CD4-positive, alpha-beta T cell (primary cell): ENCODE measurements at regions of chr3 and their contacts with region 1.

Region 1: GRCh38 chr3:125374996-125375941 is at the start of gene ZNF148:
- DNase-seq: peak; percentile 83 to 96 (median 90)
- ATAC-seq: peak; percentile 90
- H3K4me3 ChIP-seq: peak within 1 kb of the TSS; percentile 87
- H3K4me3 Mint-ChIP-seq: peak within 1 kb of the TSS; percentile 98
- H3K27ac ChIP-seq: peak within 1 kb of the TSS; percentile 88 to 92
- H3K27ac Mint-ChIP-seq: peak within 1 kb of the TSS; percentile 99
- H3K4me1 ChIP-seq: peaks cover 33% of the 10 kb centered on the region
- H3K4me1 Mint-ChIP-seq: peaks cover 56% of the 10 kb centered on the region
- H3K27me3 ChIP-seq: no peaks in the 10 kb centered on the region
- H3K27me3 Mint-ChIP-seq: no peaks in the 10 kb centered on the region
- CTCF ChIP-seq: no peak
- total RNA-seq, gene ZNF148: 30.9 to 34.0 TPM

Region 2: GRCh38 chr3:123584988-123585937 is 1790.0 kb before region 1 on chr3 and contains the start of gene HACD2:
- CTCF ChIA-PET with region 1: no interaction called
- POLR2A ChIA-PET with region 1: no interaction called
- intact Hi-C with region 1: loop called in 1 of 2 experiments (anchors 10 kb)
- DNase-seq: peak; percentile 85 to 98 (median 92)
- ATAC-seq: peak; percentile 93
- H3K4me3 ChIP-seq: peak within 1 kb of the TSS; percentile 79
- H3K4me3 Mint-ChIP-seq: peak within 1 kb of the TSS; percentile 95
- H3K27ac ChIP-seq: peak within 1 kb of the TSS; percentile 84 to 92
- H3K27ac Mint-ChIP-seq: peak within 1 kb of the TSS; percentile 89
- H3K4me1 ChIP-seq: peaks cover 16% of the 10 kb centered on the region
- H3K4me1 Mint-ChIP-seq: peaks cover 25% of the 10 kb centered on the region
- H3K27me3 ChIP-seq: no peaks in the 10 kb centered on the region
- H3K27me3 Mint-ChIP-seq: no peaks in the 10 kb centered on the region
- CTCF ChIP-seq: no peak
- total RNA-seq, gene HACD2: 12.1 to 13.3 TPM

Region 3: DNA sequence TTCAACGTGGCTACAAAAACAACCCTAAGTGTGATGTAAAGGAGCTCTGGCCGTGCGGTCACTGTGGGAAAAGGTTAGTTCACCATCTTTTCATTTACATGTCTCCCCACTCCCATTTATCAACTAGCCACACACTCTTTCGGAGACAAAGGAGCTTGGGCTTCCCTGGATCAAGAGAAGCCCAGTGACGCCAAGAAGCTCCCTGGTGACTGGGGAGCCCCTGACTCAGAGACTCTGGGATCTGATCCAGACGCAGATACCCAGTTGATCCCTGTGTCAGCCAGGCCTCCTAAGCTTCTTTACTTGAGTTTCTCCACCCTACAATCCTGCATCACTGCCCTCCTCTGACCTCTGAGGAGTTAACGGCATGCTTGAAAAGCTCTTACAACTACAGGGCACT is 363.3 kb before region 1 on chr3:
- CTCF ChIA-PET with region 1: no interaction called
- POLR2A ChIA-PET with region 1: no interaction called
- intact Hi-C with region 1: no loop called
- DNase-seq: no peak
- ATAC-seq: no peak
- H3K4me3 ChIP-seq: no peak overlapping the region
- H3K4me3 Mint-ChIP-seq: no peak overlapping the region
- H3K27ac ChIP-seq: no peak overlapping the region
- H3K27ac Mint-ChIP-seq: peak overlapping the region; percentile 0
- H3K4me1 ChIP-seq: peaks cover 14% of the 10 kb centered on the region
- H3K4me1 Mint-ChIP-seq: peaks cover 36% of the 10 kb centered on the region
- H3K27me3 ChIP-seq: no peaks in the 10 kb centered on the region
- H3K27me3 Mint-ChIP-seq: no peaks in the 10 kb centered on the region
- CTCF ChIP-seq: no peak

Region 4: DNA sequence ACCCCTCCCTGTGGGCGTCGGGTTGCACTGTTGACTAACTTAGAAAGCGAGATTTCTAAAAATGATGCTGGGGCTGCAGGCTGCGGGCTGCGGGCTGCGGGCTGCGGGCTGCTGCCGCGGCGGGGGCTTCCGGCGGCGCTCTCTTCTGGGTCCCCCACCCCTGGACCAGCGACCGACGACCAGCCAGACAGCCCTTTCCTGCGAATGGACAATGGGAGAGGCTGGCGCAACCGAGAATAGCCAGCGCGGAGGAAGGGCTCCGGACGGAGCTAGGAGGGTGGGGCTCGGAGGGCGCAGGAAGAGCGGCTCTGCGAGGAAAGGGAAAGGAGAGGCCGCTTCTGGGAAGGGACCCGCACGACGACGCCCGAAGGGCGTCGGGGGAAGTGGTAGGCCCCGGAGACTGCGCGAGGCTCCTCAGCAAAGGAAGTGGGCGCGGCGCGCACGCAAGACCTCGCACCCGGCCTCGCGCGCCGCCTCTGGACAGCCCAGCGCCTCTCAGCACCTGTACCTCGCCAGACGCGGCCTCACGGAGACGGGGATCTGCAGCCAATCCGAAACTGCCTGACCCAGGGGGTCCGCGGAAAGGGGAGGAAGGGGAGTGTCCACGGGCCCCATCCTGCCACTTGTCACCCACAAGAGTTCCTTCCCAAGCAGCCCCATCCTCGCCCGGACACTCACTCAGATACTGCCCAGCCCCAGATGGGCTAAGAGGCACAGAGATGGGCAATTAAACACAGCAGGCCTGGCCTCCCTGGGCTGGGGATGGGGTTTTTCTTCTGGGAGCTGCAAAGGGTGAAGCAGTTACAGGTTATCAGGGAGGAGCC is 233.5 kb before region 1 on chr3:
- CTCF ChIA-PET with region 1: no interaction called
- POLR2A ChIA-PET with region 1: interaction called, 3 read pairs
- intact Hi-C with region 1: loop called in 1 of 2 experiments (anchors 5 kb)
- DNase-seq: peak; percentile 27 to 85 (median 67)
- ATAC-seq: peak; percentile 89
- H3K4me3 ChIP-seq: peak overlapping the region; percentile 53
- H3K4me3 Mint-ChIP-seq: peak overlapping the region; percentile 80
- H3K27ac ChIP-seq: no peak overlapping the region
- H3K27ac Mint-ChIP-seq: peak overlapping the region; percentile 16
- H3K4me1 ChIP-seq: peaks cover 40% of the 10 kb centered on the region
- H3K4me1 Mint-ChIP-seq: peaks cover 37% of the 10 kb centered on the region
- H3K27me3 ChIP-seq: no peaks in the 10 kb centered on the region
- H3K27me3 Mint-ChIP-seq: no peaks in the 10 kb centered on the region
- CTCF ChIP-seq: peak; percentile 40

Region 5: DNA sequence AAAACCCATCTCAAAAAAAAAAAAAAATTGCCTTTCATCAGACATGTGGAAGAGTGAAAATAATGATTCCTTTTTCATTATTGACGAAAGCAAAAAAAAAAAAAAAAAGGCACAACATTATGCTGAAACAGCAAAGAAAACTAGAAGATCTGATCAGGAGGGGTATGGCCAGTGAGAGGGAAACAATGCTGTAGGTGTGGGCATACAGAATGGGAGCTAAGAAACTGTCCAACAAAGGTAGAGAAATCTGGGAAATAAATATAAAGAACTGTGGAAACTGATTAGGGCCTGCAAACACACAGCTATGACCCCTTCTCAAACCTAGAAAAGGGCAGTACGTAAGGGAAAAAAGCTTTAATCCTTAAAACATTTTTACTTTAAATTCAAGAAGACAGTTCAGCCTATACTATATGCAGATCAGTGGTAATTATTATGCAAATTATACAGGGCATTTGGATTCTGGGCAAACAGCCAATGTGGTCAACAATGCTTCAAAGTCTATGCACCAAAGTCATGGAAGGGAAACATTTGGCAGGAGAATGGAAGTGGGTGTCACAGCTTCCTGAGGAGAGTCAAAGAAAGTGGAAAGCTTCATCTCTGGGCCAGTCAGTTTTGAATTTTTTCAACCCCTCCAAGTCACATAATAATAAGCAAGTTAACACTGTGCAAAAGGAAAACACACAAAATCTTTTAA is 94.5 kb before region 1 on chr3:
- CTCF ChIA-PET with region 1: no interaction called
- POLR2A ChIA-PET with region 1: no interaction called
- intact Hi-C with region 1: no loop called
- DNase-seq: no peak
- ATAC-seq: no peak
- H3K4me3 ChIP-seq: no peak overlapping the region
- H3K4me3 Mint-ChIP-seq: no peak overlapping the region
- H3K27ac ChIP-seq: no peak overlapping the region
- H3K27ac Mint-ChIP-seq: no peak overlapping the region
- H3K4me1 ChIP-seq: no peaks in the 10 kb centered on the region
- H3K4me1 Mint-ChIP-seq: peaks cover 7% of the 10 kb centered on the region
- H3K27me3 ChIP-seq: no peaks in the 10 kb centered on the region
- H3K27me3 Mint-ChIP-seq: no peaks in the 10 kb centered on the region
- CTCF ChIP-seq: no peak

Region 6: DNA sequence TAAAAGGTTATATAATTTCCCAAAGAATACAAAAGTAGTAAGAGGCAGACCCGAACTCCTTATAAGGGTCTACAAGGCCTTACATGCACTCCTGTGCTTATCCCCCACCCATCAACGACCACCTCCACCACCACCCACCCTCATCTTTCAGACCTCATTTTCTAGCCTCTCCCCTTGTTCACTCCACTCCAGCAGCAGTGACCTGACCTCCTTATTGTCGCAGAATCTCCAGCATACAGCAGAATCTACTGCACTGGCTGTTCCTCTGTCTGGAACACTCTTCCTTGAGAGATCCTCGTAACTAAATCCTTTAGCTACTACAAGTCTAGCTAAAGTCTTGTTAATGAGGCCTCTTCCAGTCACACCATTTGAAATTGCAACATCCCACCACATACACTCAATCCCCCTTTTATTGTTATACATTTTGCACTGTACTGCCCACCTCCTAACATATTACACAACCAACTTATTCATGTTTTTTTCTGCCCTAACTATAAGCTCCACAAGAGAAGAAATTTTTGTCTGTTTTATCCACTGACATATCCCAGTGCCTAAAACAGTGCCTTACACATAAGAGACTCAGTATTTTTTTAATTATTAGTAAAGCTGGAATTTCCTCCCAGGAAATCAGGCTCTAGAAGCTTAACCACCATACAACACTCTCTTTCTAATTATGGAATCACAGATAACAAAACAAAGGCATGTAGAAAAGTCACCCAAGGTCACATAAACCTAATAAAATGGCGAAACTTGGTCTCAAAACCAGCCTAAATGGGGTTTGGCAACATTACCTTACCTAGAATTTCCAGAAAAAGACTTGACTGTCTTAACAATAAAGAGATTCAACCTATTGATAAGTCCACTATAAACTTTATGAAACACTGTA is 40.4 kb before region 1 on chr3:
- CTCF ChIA-PET with region 1: no interaction called
- POLR2A ChIA-PET with region 1: interaction called, 4 read pairs
- intact Hi-C with region 1: loop called in 1 of 2 experiments (anchors 5 kb)
- DNase-seq: no peak
- ATAC-seq: no peak
- H3K4me3 ChIP-seq: no peak overlapping the region
- H3K4me3 Mint-ChIP-seq: no peak overlapping the region
- H3K27ac ChIP-seq: no peak overlapping the region
- H3K27ac Mint-ChIP-seq: peak overlapping the region; percentile 8
- H3K4me1 ChIP-seq: peaks cover under 1% of the 10 kb centered on the region
- H3K4me1 Mint-ChIP-seq: peaks cover 62% of the 10 kb centered on the region
- H3K27me3 ChIP-seq: no peaks in the 10 kb centered on the region
- H3K27me3 Mint-ChIP-seq: no peaks in the 10 kb centered on the region
- CTCF ChIP-seq: no peak

Region 7: DNA sequence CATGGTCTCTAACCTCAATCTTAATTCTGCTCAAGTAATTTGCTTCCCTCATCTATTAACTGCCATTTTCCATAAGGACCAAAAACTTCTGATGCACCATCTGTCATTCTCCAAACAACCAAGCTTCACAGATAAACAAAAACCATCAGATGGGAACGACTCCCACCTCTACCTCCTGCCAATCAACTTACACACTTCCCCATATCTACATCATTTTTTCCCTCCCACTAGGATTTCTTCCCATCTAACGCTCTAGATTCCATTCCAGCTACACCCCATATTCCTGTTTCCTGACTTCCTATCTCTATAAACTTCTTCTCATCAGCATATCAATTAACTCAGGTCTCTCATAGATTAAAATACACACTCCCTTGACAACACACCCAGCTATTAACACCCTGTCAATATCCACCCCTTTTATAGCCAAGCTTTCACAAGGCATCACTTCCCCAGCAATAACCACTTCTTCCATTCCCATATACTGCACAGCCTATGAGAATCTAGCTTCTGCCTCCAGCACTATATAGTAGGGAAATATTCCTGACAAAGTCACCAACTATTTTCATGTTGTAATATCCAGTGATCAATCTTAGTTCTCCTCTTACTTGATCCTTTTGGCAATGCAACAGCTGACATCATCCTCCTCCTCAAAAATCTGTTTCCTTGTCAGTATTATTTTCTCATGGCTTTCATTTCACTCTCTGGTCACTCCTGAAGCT is 105.5 kb after region 1 on chr3:
- CTCF ChIA-PET with region 1: no interaction called
- POLR2A ChIA-PET with region 1: no interaction called
- intact Hi-C with region 1: no loop called
- DNase-seq: no peak
- ATAC-seq: no peak
- H3K4me3 ChIP-seq: no peak overlapping the region
- H3K4me3 Mint-ChIP-seq: no peak overlapping the region
- H3K27ac ChIP-seq: no peak overlapping the region
- H3K27ac Mint-ChIP-seq: no peak overlapping the region
- H3K4me1 ChIP-seq: no peaks in the 10 kb centered on the region
- H3K4me1 Mint-ChIP-seq: no peaks in the 10 kb centered on the region
- H3K27me3 ChIP-seq: no peaks in the 10 kb centered on the region
- H3K27me3 Mint-ChIP-seq: no peaks in the 10 kb centered on the region
- CTCF ChIP-seq: no peak

Region 8: GRCh38 chr3:125519678-125520589 is 144.7 kb after region 1 on chr3 and contains the start of gene SNX4:
- CTCF ChIA-PET with region 1: no interaction called
- POLR2A ChIA-PET with region 1: interaction called, 10 read pairs
- intact Hi-C with region 1: loop called in 1 of 2 experiments (anchors 5 kb)
- DNase-seq: peak; percentile 74 to 93 (median 84)
- ATAC-seq: peak; percentile 97
- H3K4me3 ChIP-seq: peak within 1 kb of the TSS; percentile 77
- H3K4me3 Mint-ChIP-seq: peak within 1 kb of the TSS; percentile 98
- H3K27ac ChIP-seq: peak within 1 kb of the TSS; percentile 23 to 51
- H3K27ac Mint-ChIP-seq: peak within 1 kb of the TSS; percentile 85
- H3K4me1 ChIP-seq: peaks cover 22% of the 10 kb centered on the region
- H3K4me1 Mint-ChIP-seq: peaks cover 39% of the 10 kb centered on the region
- H3K27me3 ChIP-seq: no peaks in the 10 kb centered on the region
- H3K27me3 Mint-ChIP-seq: no peaks in the 10 kb centered on the region
- CTCF ChIP-seq: no peak
- total RNA-seq, gene SNX4: 23.4 to 24.6 TPM

Region 9: DNA sequence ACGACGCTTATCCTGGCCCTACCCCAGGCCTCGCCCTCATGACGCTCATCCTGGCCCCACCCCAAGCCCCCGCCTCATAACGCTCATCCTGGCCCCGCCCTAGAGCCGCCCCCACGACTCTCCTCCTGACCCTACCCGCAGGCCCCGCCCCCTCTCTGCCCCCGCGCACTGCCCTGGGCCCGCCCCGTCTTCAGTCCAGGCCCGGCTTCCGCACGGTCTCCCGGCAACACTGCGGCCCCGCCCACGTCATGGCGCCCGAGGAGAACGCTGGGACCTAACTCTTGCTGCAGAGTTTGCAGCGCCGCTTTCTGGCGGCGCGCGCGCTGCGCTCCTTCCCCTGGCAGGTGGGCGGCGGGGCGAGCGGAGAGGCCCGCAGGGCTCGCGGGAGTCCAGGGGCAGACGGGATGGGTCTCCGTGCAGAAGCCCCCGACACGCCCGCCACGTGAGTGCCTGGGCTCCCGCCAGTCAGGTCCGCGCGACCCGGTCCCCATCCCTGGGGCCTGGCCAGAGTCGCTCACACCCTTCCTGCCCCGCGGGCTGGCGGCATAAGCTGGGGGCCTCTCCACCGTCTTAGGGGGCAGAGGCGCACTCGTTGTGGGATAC is 541.2 kb after region 1 on chr3:
- CTCF ChIA-PET with region 1: no interaction called
- POLR2A ChIA-PET with region 1: no interaction called
- intact Hi-C with region 1: loop called in 1 of 2 experiments (anchors 10 kb)
- DNase-seq: peak in 12 of 14 experiments; percentile 93 to 98 (median 96)
- ATAC-seq: peak; percentile 89
- H3K4me3 ChIP-seq: peak overlapping the region; percentile 72
- H3K4me3 Mint-ChIP-seq: peak overlapping the region; percentile 91
- H3K27ac ChIP-seq: peak overlapping the region; percentile 50 to 87
- H3K27ac Mint-ChIP-seq: peak overlapping the region; percentile 95
- H3K4me1 ChIP-seq: peaks cover 12% of the 10 kb centered on the region
- H3K4me1 Mint-ChIP-seq: peaks cover 12% of the 10 kb centered on the region
- H3K27me3 ChIP-seq: no peaks in the 10 kb centered on the region
- H3K27me3 Mint-ChIP-seq: no peaks in the 10 kb centered on the region
- CTCF ChIP-seq: no peak